ENCODE measurements at regions of chr9 and their contacts with region 1.

Region 1: GRCh38 chr9:137672907-137673791 is 54.3 kb downstream of the EHMT1 start:
- DNase-seq: peak; percentile 71
- H3K4me3 ChIP-seq: no peak overlapping the region
- H3K27ac ChIP-seq: peak overlapping the region in 3 of 4 donors; percentile 57 to 70 (median 66)
- H3K4me1 ChIP-seq: peaks cover 0 to 35% (median 32%) of the 10 kb centered on the region in 4 donors
- H3K27me3 ChIP-seq: no peaks in the 10 kb centered on the region
- CTCF ChIP-seq: peak; percentile 64 to 84 (median 72)
- EP300 ChIP-seq: no peak
- POLR2A ChIP-seq: no peak

Region 2: GRCh38 chr9:137590462-137591383 is 82.4 kb before region 1 on chr9 and contains the start of gene ZMYND19:
- intact Hi-C with region 1: no loop called
- DNase-seq: peak; percentile 94
- H3K4me3 ChIP-seq: peak within 1 kb of the TSS; percentile 64 to 84 (median 76)
- H3K27ac ChIP-seq: peak within 1 kb of the TSS; percentile 53 to 80 (median 77)
- H3K4me1 ChIP-seq: peaks cover 0 to 27% (median 22%) of the 10 kb centered on the region in 4 donors
- H3K27me3 ChIP-seq: no peaks in the 10 kb centered on the region
- CTCF ChIP-seq: no peak
- EP300 ChIP-seq: no peak
- POLR2A ChIP-seq: no peak
- total RNA-seq, gene ZMYND19: 7.2 to 13.0 (median 10.0) TPM

Region 3: GRCh38 chr9:137694967-137695879 is 22.1 kb after region 1 on chr9:
- intact Hi-C with region 1: loop called (anchors 2 kb)
- DNase-seq: no peak
- H3K4me3 ChIP-seq: no peak overlapping the region
- H3K27ac ChIP-seq: no peak overlapping the region
- H3K4me1 ChIP-seq: peaks cover 0 to 55% (median 36%) of the 10 kb centered on the region in 4 donors
- H3K27me3 ChIP-seq: no peaks in the 10 kb centered on the region
- CTCF ChIP-seq: peak in 3 of 4 experiments; percentile 56 to 71 (median 61)
- EP300 ChIP-seq: no peak
- POLR2A ChIP-seq: no peak

Region 4: GRCh38 chr9:137740312-137740711 is 67.2 kb after region 1 on chr9:
- intact Hi-C with region 1: loop called (anchors 5 kb)
- DNase-seq: peak; percentile 84
- H3K4me3 ChIP-seq: no peak overlapping the region
- H3K27ac ChIP-seq: peak overlapping the region in 2 of 4 donors; percentile 45 to 48
- H3K4me1 ChIP-seq: peaks cover 0 to 25% (median 18%) of the 10 kb centered on the region in 4 donors
- H3K27me3 ChIP-seq: no peaks in the 10 kb centered on the region
- CTCF ChIP-seq: no peak
- EP300 ChIP-seq: no peak
- POLR2A ChIP-seq: no peak

Measured in sigmoid colon (tissue), 7 donors.